Posterior cingulate gyrus (tissue), 11 donors: ENCODE measurements at regions of chr6 and their contacts with region 1.

Region 1: GRCh38 chr6:41092421-41093140 is 19.8 kb downstream of the NFYA start:
- DNase-seq: no peak

Region 2: DNA sequence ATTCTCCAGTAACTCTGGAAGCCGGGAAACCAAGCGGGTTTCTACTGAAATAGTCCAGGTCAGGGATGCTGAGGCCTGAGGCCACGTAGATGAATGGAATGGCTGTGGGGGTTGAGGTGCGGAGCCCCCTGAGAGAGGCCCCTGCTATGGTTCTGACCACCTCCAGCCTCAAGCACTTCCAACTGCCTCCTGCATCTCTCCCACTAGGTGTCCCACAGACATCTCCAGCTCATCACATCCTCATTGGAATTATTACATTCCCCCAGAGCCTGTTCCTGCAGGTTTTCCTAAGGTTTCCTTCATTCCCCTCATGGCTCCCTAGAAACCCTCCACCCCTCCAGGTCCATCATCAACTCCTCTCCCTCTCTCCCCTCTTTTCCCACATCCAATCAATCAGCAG is 102.3 kb before region 1 on chr6:
- intact Hi-C with region 1: no loop called
- DNase-seq: no peak

Region 3: GRCh38 chr6:41318654-41319565 is 226.3 kb after region 1 on chr6:
- intact Hi-C with region 1: loop called (anchors 2 kb)
- DNase-seq: peak; percentile 45 to 97 (median 78)